ENCODE measurements at regions of chr5 and their contacts with region 1.

Region 1: DNA sequence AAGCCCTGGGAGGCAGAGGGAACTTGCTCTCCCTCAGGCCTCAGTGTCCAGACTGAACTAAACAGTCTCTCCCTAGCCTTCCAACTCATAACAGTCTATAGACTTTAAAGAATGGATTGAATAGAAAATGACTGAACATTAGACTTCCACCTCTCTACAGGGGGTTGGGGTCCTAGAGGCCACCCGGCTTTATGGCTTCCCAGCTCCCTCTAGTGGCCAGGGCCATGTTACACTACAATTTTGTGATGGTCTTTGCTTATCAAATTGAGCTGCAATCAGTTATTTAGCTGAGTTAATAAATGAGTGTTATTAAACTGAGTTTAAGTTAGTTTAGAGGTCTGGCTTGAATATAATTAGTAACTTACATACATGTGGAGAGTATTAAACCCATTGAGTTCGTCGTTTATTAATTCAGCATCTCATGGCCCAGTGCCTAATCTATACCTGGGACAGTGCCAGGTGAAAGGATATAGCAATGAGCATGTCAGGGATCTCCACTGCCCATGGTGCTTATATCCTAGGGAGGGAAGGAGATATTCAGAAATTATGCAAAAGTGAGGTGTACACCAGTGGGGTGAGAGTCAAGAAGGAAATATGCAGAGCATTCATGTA is 105.2 kb downstream of the SH3TC2 start:
- DNase-seq: peak; percentile 35 to 45
- H3K4me3 ChIP-seq: no peak overlapping the region
- H3K27ac ChIP-seq: no peak overlapping the region
- H3K4me1 ChIP-seq: peaks cover 35% of the 10 kb centered on the region
- H3K27me3 ChIP-seq: no peaks in the 10 kb centered on the region
- CTCF ChIP-seq: peak; percentile 97

Region 2: DNA sequence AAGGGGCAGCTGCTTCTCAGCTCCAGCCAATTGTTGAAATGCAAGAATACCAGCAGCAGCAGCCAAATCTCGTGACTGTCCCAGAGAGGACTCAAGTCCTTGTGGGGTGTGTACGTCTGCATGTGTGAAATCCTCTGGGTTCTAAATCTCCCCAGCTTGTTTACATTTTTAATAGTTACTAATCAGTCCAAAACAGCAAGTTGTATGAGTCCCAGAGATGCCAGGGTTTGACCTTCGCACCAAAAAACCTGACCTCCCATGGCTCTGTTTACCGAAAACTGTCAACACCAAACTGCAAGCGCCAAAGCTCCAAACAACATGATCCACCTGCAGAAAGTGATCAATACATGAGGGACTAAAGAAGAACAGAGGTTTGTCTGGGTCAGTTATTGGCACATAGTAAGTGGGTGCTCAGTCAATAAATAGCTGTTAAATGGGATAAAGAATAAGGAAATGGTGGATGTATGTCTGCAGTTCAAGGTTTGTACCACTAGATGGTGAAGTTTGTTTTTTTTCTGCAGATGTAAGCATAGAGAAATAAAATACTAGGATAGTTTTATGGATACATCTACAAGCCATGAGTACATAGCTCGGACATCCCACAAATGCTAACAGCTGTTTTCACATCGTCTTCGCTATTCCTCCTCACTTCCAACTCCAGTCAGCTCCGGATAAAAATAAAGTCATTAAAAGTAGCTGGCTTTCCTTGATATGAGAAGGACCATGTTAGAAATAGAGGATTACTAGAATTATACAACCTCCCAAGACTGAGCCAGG is 216.5 kb before region 1 on chr5:
- CTCF ChIA-PET with region 1: interaction called, 23 read pairs
- POLR2A ChIA-PET with region 1: no interaction called
- intact Hi-C with region 1: loop called (anchors 2 kb)
- DNase-seq: peak in 1 of 2 experiments; percentile 65
- H3K4me3 ChIP-seq: no peak overlapping the region
- H3K27ac ChIP-seq: no peak overlapping the region
- H3K4me1 ChIP-seq: peaks cover 14% of the 10 kb centered on the region
- H3K27me3 ChIP-seq: no peaks in the 10 kb centered on the region
- CTCF ChIP-seq: peak; percentile 93

Region 3: DNA sequence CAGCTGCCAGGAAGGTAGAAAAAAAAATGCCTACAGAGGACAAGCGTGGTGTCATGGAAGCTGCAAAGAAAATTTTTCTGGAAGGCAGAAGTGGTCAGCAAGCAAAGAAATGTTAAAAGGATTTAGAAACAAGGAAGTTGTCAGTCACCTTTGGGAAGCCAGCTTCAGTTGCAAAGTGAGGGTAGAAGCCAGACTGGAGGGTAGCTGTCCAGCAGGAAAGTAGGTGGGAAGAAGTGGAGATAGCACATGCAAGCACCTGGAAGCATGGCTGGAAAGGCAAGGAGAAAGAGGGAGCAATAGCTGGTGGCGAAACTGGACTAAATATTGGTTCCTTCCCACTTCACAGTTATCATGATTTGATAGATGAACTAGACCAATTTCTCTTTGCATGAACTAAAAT is 77.0 kb before region 1 on chr5:
- CTCF ChIA-PET with region 1: no interaction called
- POLR2A ChIA-PET with region 1: interaction called, 12 read pairs
- intact Hi-C with region 1: no loop called
- DNase-seq: no peak
- H3K4me3 ChIP-seq: no peak overlapping the region
- H3K27ac ChIP-seq: no peak overlapping the region
- H3K4me1 ChIP-seq: no peaks in the 10 kb centered on the region
- H3K27me3 ChIP-seq: no peaks in the 10 kb centered on the region
- CTCF ChIP-seq: no peak

Region 4: GRCh38 chr5:148979104-148979723 is 21.5 kb after region 1 on chr5:
- CTCF ChIA-PET with region 1: interaction called, 10 read pairs
- POLR2A ChIA-PET with region 1: interaction called, 3 read pairs
- intact Hi-C with region 1: no loop called
- DNase-seq: peak; percentile 84 to 85
- H3K4me3 ChIP-seq: peak overlapping the region; percentile 32; the same call in 1 of the 2 replicates
- H3K27ac ChIP-seq: peak overlapping the region; percentile 99
- H3K4me1 ChIP-seq: peaks cover 79% of the 10 kb centered on the region
- H3K27me3 ChIP-seq: no peaks in the 10 kb centered on the region
- CTCF ChIP-seq: no peak